ENCODE measurements at regions of chr11 and their contacts with region 1.

Region 1: DNA sequence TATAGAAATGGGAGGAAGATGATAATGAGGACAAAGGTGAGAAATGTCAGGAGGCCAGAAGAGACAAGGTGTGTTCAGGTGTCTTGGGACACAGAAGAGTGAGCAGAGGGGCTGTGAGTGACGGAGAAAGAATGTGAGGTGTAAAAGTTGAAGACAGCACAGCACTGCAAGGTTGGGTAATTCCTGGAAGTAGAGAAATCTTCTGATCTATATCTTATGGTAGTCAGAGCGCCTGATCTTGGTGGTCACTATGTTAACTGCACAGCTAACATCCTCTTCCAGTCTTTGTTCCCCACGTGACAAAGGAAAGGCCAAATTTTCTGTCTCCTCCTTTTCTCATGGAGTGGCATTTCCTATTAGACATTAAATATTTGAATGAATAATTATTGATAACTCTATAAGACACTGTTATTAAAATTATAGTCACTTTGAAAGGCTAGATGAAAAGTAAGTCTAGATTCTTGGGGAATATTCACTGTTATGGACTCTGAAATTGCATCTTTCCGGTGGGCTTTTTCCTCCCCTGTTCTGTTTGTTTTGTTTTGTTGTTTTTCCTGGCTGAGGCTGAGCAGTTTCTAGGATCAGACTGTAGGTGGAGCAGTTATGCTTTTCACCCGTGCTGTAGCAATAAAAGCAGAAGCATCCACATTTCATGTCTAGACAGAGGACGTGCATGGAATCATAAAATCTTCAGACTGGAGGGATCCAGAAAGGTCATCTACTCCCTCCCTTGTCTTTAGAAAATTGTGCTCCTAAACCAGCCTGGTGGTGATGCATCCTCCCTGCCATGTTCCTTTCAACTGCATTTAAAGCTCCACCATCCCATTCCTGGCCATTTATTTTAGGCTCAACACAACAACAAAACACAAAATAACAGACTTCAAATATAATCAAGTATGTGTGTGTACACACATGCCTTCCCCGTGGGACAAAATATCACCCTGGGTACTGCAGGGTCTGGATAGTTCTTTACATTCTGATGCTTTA is 26.6 kb downstream of the SC5D start:
- DNase-seq: no peak
- ATAC-seq: peak; percentile 53 to 79

Region 2: DNA sequence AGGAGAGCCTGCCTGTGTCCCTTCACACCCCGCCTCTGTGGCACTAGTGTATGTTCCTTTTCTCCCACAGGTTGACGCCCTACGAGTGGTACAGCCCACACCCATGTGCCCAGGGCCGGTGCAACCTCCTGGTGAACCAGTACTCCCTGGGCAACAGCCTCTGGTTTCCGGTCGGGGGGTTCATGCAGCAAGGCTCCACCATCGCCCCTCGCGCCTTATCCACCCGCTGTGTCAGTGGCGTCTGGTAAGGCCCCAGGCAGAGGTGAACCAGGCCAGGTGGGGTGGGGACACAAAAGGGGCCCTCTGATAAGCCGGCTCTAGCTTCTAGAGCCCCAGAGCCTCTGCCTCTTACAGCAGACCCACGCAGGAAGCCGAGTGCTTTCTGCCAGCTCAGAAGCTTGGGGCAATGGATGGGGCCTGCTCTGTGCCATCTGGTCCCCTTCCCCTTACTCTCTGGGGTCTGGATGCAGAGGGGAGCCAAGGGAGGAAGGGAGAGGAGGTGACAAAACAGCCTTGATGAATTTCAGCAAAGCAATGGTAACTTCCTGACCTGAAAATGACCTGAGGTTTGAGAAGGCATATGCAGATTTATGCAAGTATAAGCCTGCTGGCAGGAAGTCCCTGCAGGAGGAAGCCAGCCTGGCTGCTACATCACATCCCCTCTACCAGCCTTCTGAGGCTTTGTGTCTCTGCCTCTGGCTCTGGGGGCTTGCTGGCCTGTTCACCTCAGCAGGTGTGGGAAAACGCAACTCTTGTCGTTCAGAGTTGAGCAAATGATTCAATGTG is 362.2 kb before region 1 on chr11:
- intact Hi-C with region 1: no loop called
- DNase-seq: no peak
- ATAC-seq: no peak

Region 3: GRCh38 chr11:121426476-121427399 is 107.6 kb after region 1 on chr11:
- intact Hi-C with region 1: loop called in 1 of 2 experiments (anchors 10 kb)
- DNase-seq: peak; percentile 62
- ATAC-seq: peak; percentile 88 to 90

Region 4: DNA sequence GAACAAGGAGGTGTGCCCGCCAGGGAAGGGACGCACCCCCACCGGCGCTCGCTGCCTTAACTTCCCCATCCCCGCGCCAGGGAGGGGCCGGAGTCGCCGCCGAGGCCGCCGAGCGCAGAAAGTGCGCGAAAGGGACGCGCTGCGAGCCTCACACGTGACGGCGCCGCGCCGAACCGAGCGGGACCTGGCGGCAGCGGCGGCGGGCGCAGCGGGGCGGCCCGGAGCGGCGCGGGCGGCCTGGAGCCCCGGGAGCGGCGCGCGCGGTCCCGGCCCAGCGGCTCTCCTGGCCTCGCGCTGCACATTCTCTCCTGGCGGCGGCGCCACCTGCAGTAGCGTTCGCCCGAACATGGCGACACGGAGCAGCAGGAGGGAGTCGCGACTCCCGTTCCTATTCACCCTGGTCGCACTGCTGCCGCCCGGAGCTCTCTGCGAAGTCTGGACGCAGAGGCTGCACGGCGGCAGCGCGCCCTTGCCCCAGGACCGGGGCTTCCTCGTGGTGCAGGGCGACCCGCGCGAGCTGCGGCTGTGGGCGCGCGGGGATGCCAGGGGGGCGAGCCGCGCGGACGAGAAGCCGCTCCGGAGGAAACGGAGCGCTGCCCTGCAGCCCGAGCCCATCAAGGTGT is 133.0 kb after region 1 on chr11 and contains the start of gene SORL1:
- intact Hi-C with region 1: loop called in 1 of 2 experiments (anchors 5 kb)
- DNase-seq: peak; percentile 78
- ATAC-seq: peak; percentile 92 to 95
- total RNA-seq, gene SORL1: 9.6 to 10.6 TPM

Region 5: DNA sequence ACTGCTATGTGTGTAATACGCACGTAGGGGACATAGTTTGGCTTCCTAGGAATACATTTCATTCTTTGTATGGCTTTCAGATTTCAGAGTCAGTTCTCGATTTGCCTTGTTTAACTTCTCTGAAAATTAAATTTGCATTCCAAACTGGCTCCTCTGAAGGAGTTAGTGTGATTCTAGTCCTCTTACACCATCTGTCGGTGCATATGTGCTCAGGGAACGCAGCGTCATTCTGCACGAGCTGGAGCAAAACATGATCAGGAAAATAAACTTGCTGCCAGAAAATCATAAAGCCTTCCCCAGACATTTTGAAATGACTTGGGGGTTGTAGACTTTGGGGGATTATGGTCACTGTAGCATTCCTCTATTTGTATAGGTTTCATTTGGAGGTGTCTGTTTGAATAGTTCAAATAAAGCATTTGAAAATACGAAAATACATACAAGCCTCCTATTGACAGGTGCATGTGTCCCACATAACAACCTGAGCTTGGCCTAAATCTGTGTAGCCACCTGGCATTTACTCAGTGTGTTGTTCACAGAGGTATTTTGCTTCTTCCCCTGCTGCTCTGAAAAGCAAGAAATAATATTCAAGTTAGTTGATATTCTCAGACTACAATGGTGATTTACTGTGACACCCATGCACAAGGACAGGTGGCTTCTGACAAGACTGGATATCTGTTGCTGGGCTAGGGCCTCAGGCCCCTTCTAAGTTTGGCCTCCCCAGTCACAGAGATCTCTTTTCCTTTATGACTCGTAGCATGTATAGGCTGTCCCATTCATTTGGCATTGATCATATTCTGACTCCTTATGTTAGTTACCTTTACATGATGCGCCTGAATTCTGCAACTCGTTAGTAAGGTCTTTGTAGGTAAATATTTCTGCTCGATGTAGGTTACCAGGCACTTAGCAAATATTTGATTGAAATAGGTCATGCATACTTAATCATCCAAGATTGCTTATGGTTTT is 215.3 kb after region 1 on chr11:
- intact Hi-C with region 1: loop called in 1 of 2 experiments (anchors 5 kb)
- DNase-seq: no peak
- ATAC-seq: peak; percentile 53 to 68

Region 6: DNA sequence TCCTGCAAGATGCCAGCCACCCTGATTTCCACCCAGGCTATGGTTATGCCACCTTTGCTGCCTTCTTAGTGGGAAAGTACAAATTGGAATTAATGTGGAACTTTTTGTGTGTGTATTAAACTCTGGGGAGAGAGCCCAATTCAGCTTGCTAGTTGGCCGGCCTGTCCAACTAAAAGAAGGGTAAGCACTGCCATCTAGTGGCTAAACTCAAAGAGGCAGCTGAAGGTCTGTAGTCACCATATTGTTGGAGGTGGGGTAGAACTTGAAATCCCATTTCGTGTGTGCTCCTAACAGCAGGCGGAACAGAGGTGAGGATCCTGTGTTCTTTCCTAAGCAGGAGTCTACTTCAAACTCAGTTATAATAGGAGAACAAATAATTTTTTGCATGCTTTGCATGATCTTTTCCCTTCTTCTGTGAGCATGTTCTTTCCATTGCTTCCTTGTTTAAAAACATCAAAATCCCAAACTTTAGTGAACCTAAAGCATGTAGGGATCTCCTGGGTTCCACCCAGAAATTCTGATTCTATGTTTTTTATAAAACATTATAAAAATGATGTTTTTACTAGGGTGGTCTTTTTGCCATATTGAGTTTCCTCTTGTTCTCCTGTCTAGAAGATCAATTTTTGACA is 272.4 kb after region 1 on chr11:
- intact Hi-C with region 1: loop called (anchors 2 to 5 kb)
- DNase-seq: peak; percentile 53
- ATAC-seq: peak; percentile 69 to 70